HEK293 (cell line): ENCODE measurements at regions of chr1 and their contacts with region 1.

Region 1: GRCh38 chr1:232630047-232630893 is at the start of gene SIPA1L2:
- H3K4me3 ChIP-seq: peak within 1 kb of the TSS; percentile 91
- H3K27ac ChIP-seq: peak within 1 kb of the TSS; percentile 91
- H3K4me1 ChIP-seq: peaks cover 20% of the 10 kb centered on the region
- CTCF ChIP-seq: peak; percentile 100

Region 2: GRCh38 chr1:231866392-231867331 is 763.6 kb before region 1 on chr1:
- CTCF ChIA-PET with region 1: interaction called, 17 read pairs
- POLR2A ChIA-PET with region 1: interaction called, 5 read pairs
- H3K4me3 ChIP-seq: no peak overlapping the region
- H3K27ac ChIP-seq: no peak overlapping the region
- H3K4me1 ChIP-seq: no peaks in the 10 kb centered on the region; the same call in 1 of the 2 replicates
- CTCF ChIP-seq: peak; percentile 85

Region 3: GRCh38 chr1:232509570-232509969 is 120.7 kb before region 1 on chr1:
- CTCF ChIA-PET with region 1: interaction called, 11 read pairs
- POLR2A ChIA-PET with region 1: interaction called, 3 read pairs
- H3K4me3 ChIP-seq: no peak overlapping the region
- H3K27ac ChIP-seq: no peak overlapping the region
- H3K4me1 ChIP-seq: peaks cover 31% of the 10 kb centered on the region
- CTCF ChIP-seq: no peak

Region 4: DNA sequence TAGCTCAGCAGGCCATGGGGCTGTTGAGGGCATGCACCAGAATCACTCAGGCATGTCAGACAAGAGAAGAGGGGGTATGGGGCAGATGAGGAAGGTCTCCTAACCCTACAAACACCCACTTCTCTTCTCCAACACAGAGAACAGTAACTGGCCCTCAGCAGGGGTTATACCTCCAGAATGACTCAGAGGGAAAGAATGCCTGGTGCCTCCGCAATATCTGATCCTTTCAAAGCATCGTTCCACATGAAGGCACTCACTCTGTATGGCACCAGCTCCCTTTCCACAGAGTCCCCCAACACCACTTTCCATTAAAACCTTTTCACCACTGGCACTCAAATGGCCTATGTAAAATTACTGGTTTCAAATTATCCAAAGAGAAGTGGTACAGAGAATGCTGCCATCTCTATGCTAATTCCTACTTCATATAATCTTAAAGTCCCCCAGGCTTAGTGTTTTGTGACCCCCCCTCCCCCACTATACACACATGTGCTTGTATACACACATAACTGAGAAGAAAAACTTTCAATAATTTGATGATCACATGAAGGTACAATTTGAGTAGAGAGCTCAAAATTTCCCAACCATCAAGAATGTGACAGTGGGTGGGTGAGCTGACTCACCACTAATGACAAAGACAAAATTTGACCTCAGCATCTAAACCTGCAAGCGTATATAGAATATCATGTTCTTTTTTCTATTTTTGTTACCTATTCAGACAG is 91.9 kb before region 1 on chr1:
- CTCF ChIA-PET with region 1: interaction called, 14 read pairs
- POLR2A ChIA-PET with region 1: interaction called, 3 read pairs
- H3K4me3 ChIP-seq: no peak overlapping the region
- H3K27ac ChIP-seq: peak overlapping the region; percentile 38
- H3K4me1 ChIP-seq: peaks cover 19% of the 10 kb centered on the region
- CTCF ChIP-seq: no peak

Region 5: DNA sequence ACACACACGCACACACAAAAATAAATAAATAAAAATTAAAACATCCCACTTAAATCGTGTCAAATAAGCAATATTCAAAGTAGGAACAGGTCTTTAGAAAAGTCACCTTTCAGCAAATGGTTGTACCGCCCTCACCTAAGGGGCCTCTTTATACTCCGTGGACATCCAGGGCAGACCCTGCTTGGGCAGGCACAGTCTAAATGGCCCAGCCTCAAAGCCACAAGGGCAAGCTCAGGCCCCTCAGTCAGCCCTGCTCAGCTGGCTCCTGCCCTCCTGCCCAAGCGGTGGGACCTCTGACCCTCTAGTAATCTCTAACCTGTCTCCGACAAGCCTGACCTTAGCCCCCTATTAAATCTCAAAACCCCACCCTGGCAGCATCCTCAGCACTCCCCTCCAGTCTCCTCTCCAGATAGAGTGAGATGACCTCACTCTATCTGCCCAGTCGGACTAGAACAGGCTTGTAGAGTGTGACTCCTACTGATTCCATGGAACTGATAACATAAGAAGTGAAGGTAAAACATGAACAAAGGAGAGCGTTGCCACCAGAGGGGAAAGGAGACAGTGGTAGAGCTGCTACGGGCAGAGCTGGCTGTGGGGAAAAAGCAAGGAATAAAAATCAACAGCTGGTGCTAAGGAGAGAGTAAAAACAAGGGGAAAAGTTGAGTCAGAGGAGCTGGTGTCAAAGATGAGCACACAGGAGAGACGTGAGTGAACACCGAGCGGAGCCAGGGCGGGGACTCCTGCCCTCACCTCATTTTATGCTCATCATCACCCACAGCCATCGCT is 36.4 kb before region 1 on chr1:
- CTCF ChIA-PET with region 1: interaction called, 24 read pairs
- POLR2A ChIA-PET with region 1: interaction called, 3 read pairs
- H3K4me3 ChIP-seq: no peak overlapping the region
- H3K27ac ChIP-seq: peak overlapping the region; percentile 62
- H3K4me1 ChIP-seq: peaks cover 34% of the 10 kb centered on the region
- CTCF ChIP-seq: no peak

Region 6: GRCh38 chr1:232599178-232600041 is 30.9 kb before region 1 on chr1:
- CTCF ChIA-PET with region 1: interaction called, 24 read pairs
- POLR2A ChIA-PET with region 1: interaction called, 6 read pairs
- H3K4me3 ChIP-seq: no peak overlapping the region
- H3K27ac ChIP-seq: peak overlapping the region; percentile 65
- H3K4me1 ChIP-seq: peaks cover 34% of the 10 kb centered on the region
- CTCF ChIP-seq: no peak

Region 7: GRCh38 chr1:232690285-232690935 is 60.1 kb after region 1 on chr1:
- CTCF ChIA-PET with region 1: no interaction called
- POLR2A ChIA-PET with region 1: no interaction called
- H3K4me3 ChIP-seq: no peak overlapping the region
- H3K27ac ChIP-seq: no peak overlapping the region
- H3K4me1 ChIP-seq: no peaks in the 10 kb centered on the region
- CTCF ChIP-seq: no peak

Region 8: DNA sequence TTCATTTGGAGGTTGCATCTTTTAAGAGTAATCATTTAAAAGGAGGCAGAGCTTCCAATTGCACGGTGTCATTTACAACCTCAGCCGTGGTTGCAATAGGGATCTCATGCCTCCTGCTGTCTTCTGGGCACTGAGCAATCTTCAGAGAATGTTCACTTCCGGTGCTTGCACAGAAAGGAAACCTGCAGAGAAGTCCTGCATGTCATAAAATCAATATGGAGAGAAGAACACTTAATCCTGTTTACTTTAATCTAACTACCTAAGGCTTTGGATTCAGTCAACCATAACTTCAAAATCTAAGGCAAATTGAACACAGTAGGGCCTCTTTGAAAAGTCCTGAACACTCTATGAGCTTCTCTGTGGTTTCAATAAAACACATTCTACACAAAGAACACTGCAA is 163.7 kb after region 1 on chr1:
- CTCF ChIA-PET with region 1: interaction called, 10 read pairs
- POLR2A ChIA-PET with region 1: interaction called, 7 read pairs
- H3K4me3 ChIP-seq: no peak overlapping the region
- H3K27ac ChIP-seq: peak overlapping the region; percentile 27
- H3K4me1 ChIP-seq: peaks cover 18% of the 10 kb centered on the region
- CTCF ChIP-seq: peak; percentile 50; the same call in 1 of the 2 replicates